Pancreas (tissue), 10 donors: ENCODE measurements at regions of chr1 and their contacts with region 1.

Region 1: DNA sequence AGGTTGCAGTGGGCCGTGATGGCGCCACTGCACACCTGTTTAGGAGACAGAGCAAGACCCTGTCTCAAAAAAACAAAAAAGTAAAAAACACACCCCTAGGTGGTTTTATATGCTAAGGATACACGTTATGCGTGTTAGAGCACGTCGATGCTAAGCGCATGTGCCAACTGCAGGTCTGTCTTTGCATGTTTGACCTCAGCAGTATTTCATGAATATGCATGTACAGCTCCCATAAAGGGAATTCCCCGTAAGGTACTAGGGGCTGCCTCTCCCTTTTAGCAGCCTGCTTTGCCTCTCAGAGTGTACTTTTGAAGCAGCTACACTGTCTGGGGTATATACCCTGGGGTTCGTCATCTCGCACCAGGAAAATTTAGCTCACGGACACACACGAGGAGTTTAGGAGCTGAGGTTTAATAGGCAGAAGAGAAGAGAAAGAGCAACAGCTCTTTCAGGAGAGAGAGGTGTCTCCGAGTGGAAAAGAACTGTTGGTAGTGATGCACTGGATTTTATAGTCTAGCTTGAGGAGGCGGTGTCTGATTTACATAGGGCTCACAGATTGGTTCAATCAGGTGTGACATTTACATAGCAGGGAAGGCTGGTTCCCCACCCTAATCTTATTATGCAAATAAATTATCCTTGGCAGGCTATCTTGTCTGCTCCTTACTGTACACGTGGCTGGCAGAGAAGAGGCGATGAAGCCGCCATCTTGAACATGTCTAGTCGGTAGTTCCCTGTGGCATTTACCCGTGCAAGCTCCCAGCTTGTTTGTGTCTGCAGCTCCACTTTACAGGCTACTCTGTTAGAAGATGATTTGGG is 4.2 kb upstream of the OTUD3 start:
- DNase-seq: no peak
- ATAC-seq: no peak
- H3K4me3 ChIP-seq: no peak overlapping the region
- H3K27ac ChIP-seq: no peak overlapping the region
- H3K4me1 ChIP-seq: peaks cover 0 to under 1% (median under 1%) of the 10 kb centered on the region in 3 donors
- H3K27me3 ChIP-seq: no peaks in the 10 kb centered on the region
- CTCF ChIP-seq: no peak

Region 2: GRCh38 chr1:19240673-19241538 is 637.1 kb before region 1 on chr1:
- intact Hi-C with region 1: no loop called
- DNase-seq: peak; percentile 35 to 86 (median 72)
- ATAC-seq: peak; percentile 92 to 99 (median 98)
- H3K4me3 ChIP-seq: no peak overlapping the region
- H3K27ac ChIP-seq: no peak overlapping the region
- H3K4me1 ChIP-seq: no peaks in the 10 kb centered on the region
- H3K27me3 ChIP-seq: no peaks in the 10 kb centered on the region
- CTCF ChIP-seq: peak; percentile 89 to 95 (median 93)

Region 3: DNA sequence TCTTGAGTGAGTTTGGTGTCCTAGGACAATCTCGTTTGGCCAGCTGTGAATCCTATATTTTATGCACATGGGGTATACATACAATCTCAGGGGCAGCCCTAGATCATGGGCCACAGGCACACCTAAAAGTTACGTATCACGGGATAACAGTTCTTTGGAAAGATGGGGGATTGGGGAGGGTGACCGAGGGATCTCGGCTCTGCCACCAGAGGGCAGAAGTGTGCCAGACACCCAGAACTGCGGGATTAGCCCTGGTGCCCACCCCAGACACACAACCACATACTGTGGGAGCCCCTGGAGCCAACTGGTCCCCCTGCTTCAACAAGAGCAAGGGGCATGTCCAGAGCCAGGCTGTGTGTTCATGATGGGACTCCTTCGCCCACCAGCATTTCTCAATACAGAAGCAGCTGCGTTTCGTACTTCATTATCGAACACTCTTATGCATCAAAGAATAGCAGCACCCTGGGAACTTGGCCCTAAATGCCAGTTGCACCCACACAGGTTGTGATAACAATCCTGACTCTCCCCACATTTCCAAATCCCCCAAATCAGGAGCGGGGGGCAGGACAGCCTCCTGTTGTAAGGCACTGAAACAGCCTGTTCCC is 115.8 kb before region 1 on chr1:
- intact Hi-C with region 1: loop called in 1 of 3 experiments (anchors 5 kb)
- DNase-seq: peak in 4 of 6 donors; percentile 13 to 74 (median 57)
- ATAC-seq: peak; percentile 51 to 86 (median 71)
- H3K4me3 ChIP-seq: no peak overlapping the region
- H3K27ac ChIP-seq: no peak overlapping the region
- H3K4me1 ChIP-seq: no peaks in the 10 kb centered on the region
- H3K27me3 ChIP-seq: no peaks in the 10 kb centered on the region
- CTCF ChIP-seq: peak; percentile 44 to 55 (median 50)